ENCODE measurements at regions of chr1 and their contacts with region 1.

Region 1: GRCh38 chr1:172778456-172779455 is 119.9 kb downstream of the FASLG start:
- DNase-seq: peak in 6 of 9 donors; percentile 8 to 32 (median 18)
- ATAC-seq: peak; percentile 74
- H3K4me3 ChIP-seq: peak overlapping the region; percentile 17
- H3K4me3 Mint-ChIP-seq: peak overlapping the region in 9 of 10 donors; percentile 23 to 72 (median 51)
- H3K27ac ChIP-seq: no peak overlapping the region
- H3K27ac Mint-ChIP-seq: peak overlapping the region in 5 of 9 donors; percentile 1 to 48 (median 41)
- H3K4me1 ChIP-seq: peaks cover 0 to 9% of the 10 kb centered on the region in 2 donors
- H3K4me1 Mint-ChIP-seq: peaks cover 8 to 30% (median 17%) of the 10 kb centered on the region in 7 donors
- H3K27me3 ChIP-seq: no peaks in the 10 kb centered on the region
- H3K27me3 Mint-ChIP-seq: peaks cover 0 to 18% (median 0%) of the 10 kb centered on the region in 5 donors

Region 2: GRCh38 chr1:172761581-172762025 is 17.2 kb before region 1 on chr1:
- CTCF ChIA-PET with region 1: interaction called, 12 read pairs
- POLR2A ChIA-PET with region 1: interaction called, 11 read pairs
- intact Hi-C with region 1: no loop called
- DNase-seq: no peak
- ATAC-seq: no peak
- H3K4me3 ChIP-seq: no peak overlapping the region
- H3K4me3 Mint-ChIP-seq: no peak overlapping the region
- H3K27ac ChIP-seq: no peak overlapping the region
- H3K27ac Mint-ChIP-seq: no peak overlapping the region
- H3K4me1 ChIP-seq: peaks cover 0 to 25% of the 10 kb centered on the region in 2 donors
- H3K4me1 Mint-ChIP-seq: peaks cover 3 to 58% (median 44%) of the 10 kb centered on the region in 7 donors
- H3K27me3 ChIP-seq: no peaks in the 10 kb centered on the region
- H3K27me3 Mint-ChIP-seq: peaks cover 0 to 28% (median 0%) of the 10 kb centered on the region in 5 donors

Region 3: DNA sequence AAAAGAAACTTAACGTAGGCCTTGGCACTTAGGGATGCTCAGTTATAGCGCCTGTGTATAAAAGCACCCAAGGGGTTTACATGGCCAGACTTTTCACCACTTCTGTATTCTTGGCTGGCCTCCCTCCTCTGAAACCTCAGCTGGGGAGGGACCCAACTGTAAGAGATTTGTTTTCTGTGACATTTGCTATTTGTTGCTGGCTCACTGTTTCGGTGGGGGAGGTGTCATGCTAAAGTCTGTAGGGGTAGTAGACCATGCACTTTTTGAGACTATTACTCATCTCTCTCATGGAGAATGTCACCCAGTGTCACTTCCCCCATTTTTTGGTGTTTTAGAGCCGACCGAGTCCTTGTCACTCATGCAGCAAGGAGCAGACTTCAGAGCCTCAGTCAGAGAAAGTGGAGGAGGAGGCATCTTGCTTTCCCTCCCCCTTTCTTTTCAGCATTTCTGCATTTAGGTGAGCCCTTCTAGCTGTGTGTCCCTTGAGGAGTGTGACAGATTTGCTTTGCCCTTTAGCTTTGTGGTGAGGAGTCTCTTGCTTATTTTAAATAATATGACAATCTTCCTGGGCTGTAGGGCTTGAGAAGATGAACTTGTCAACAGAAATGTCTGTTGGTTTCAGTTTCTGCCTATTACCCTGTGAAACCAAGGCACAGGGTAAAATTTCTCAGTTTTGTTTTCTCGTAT is 40.2 kb after region 1 on chr1:
- CTCF ChIA-PET with region 1: no interaction called
- POLR2A ChIA-PET with region 1: no interaction called
- intact Hi-C with region 1: loop called in 1 of 2 experiments (anchors 5 kb)
- DNase-seq: peak in 6 of 9 donors; percentile 7 to 44 (median 12)
- ATAC-seq: peak; percentile 81
- H3K4me3 ChIP-seq: peak overlapping the region; percentile 40
- H3K4me3 Mint-ChIP-seq: peak overlapping the region; percentile 63 to 79 (median 72)
- H3K27ac ChIP-seq: peak overlapping the region; percentile 53
- H3K27ac Mint-ChIP-seq: peak overlapping the region; percentile 76 to 93 (median 84)
- H3K4me1 ChIP-seq: peaks cover 6 to 17% of the 10 kb centered on the region in 2 donors
- H3K4me1 Mint-ChIP-seq: peaks cover 29 to 56% (median 36%) of the 10 kb centered on the region in 7 donors
- H3K27me3 ChIP-seq: no peaks in the 10 kb centered on the region
- H3K27me3 Mint-ChIP-seq: peaks cover 0 to 14% (median 0%) of the 10 kb centered on the region in 5 donors

Region 4: GRCh38 chr1:172940174-172940855 is 161.6 kb after region 1 on chr1:
- CTCF ChIA-PET with region 1: no interaction called
- POLR2A ChIA-PET with region 1: no interaction called
- intact Hi-C with region 1: loop called in 1 of 2 experiments (anchors 5 kb)
- DNase-seq: no peak
- ATAC-seq: no peak
- H3K4me3 ChIP-seq: no peak overlapping the region
- H3K4me3 Mint-ChIP-seq: no peak overlapping the region
- H3K27ac ChIP-seq: no peak overlapping the region
- H3K27ac Mint-ChIP-seq: no peak overlapping the region
- H3K4me1 ChIP-seq: no peaks in the 10 kb centered on the region
- H3K4me1 Mint-ChIP-seq: no peaks in the 10 kb centered on the region
- H3K27me3 ChIP-seq: no peaks in the 10 kb centered on the region
- H3K27me3 Mint-ChIP-seq: peaks cover 0 to 7% (median 0%) of the 10 kb centered on the region in 5 donors

Region 5: GRCh38 chr1:173009597-173009996 is 230.8 kb after region 1 on chr1:
- CTCF ChIA-PET with region 1: no interaction called
- POLR2A ChIA-PET with region 1: no interaction called
- intact Hi-C with region 1: no loop called
- DNase-seq: no peak
- ATAC-seq: peak; percentile 81
- H3K4me3 ChIP-seq: no peak overlapping the region
- H3K4me3 Mint-ChIP-seq: no peak overlapping the region
- H3K27ac ChIP-seq: no peak overlapping the region
- H3K27ac Mint-ChIP-seq: no peak overlapping the region
- H3K4me1 ChIP-seq: no peaks in the 10 kb centered on the region
- H3K4me1 Mint-ChIP-seq: peaks cover 2 to 17% (median 14%) of the 10 kb centered on the region in 7 donors
- H3K27me3 ChIP-seq: no peaks in the 10 kb centered on the region
- H3K27me3 Mint-ChIP-seq: peaks cover 0 to 17% (median 6%) of the 10 kb centered on the region in 5 donors

Region 6: GRCh38 chr1:173202430-173203145 is 423.8 kb after region 1 on chr1:
- CTCF ChIA-PET with region 1: interaction called, 12 read pairs
- POLR2A ChIA-PET with region 1: no interaction called
- intact Hi-C with region 1: no loop called
- DNase-seq: peak in 1 of 9 donors; percentile 8
- ATAC-seq: no peak
- H3K4me3 ChIP-seq: no peak overlapping the region
- H3K4me3 Mint-ChIP-seq: peak overlapping the region in 1 of 10 donors; percentile 26
- H3K27ac ChIP-seq: no peak overlapping the region
- H3K27ac Mint-ChIP-seq: peak overlapping the region in 7 of 9 donors; percentile 1 to 99 (median 43)
- H3K4me1 ChIP-seq: peaks cover 32 to 37% of the 10 kb centered on the region in 2 donors
- H3K4me1 Mint-ChIP-seq: peaks cover 28 to 52% (median 46%) of the 10 kb centered on the region in 7 donors
- H3K27me3 ChIP-seq: no peaks in the 10 kb centered on the region
- H3K27me3 Mint-ChIP-seq: peaks cover 0 to 31% (median 0%) of the 10 kb centered on the region in 5 donors

Measured in naive thymus-derived CD4-positive, alpha-beta T cell (primary cell).